ENCODE measurements at regions of chr16 and their contacts with region 1.

Region 1: DNA sequence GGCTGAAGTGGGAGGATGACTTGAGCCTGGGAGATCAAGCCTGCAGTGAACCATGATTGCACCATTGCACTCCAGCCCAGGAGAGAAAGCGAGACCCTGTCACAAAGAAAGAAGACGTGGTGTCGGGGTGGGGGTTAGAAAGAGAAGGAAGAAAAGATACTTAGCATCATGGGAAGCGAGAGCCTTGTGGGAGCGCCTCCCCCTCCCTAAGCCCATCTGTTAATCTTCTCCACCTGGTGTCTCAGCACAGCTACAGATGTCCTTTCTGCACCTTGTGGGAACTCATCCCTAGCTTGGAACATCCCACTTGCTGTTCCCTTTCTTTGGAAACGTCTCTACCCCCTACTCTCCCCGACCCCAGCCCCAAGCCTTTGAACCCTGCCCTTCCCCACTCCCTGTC is 6.0 kb downstream of the ZNF688 start:
- DNase-seq: no peak
- ATAC-seq: no peak
- H3K4me3 ChIP-seq: no peak overlapping the region
- H3K4me3 Mint-ChIP-seq: no peak overlapping the region
- H3K27ac ChIP-seq: no peak overlapping the region
- H3K27ac Mint-ChIP-seq: peak overlapping the region; percentile 26
- H3K4me1 ChIP-seq: peaks cover 25 to 42% of the 10 kb centered on the region in 2 donors
- H3K4me1 Mint-ChIP-seq: peaks cover 31% of the 10 kb centered on the region
- H3K27me3 ChIP-seq: no peaks in the 10 kb centered on the region
- H3K27me3 Mint-ChIP-seq: no peaks in the 10 kb centered on the region
- CTCF ChIP-seq: no peak

Region 2: DNA sequence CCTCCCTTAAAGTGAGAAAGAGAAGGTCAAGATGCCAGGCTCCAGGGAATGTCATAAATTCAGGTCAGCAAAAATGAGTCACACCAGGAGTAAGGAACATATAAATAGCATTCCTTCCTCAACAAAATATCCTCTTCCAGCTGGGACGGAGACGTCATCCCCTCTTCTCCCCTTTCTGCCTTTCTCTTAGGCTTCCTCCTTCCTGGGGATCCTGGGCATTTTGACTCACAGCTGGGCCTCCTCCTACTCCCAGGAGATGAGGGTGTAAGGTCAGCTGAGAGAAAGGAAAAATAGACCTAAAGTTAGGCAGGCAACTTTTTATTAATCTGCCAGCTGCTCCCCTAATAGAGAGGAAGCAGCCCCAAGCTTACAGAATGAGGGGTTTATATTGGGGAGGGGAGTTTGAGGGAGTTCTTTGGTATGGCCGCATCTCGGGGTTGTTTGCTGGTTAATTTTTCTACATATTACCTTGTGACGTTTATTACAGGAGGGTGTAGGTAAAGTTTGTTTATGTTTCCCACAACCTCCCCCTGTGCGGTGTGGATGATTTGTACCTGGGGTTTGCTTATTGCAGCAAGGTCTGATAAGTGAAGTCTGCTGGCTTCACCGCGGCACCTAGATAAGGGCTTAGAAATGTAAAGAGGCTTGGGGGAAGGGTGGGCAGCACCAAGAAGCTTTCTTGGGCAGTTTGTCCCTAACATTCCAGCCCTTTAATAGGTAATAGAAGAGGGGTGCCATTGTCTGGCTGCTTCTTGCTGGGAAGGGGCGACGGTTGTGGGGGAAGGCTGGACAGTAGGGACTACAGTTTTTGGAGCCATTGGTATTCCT is 23.8 kb before region 1 on chr16:
- CTCF ChIA-PET with region 1: no interaction called
- POLR2A ChIA-PET with region 1: no interaction called
- intact Hi-C with region 1: no loop called
- DNase-seq: no peak
- ATAC-seq: no peak
- H3K4me3 ChIP-seq: no peak overlapping the region
- H3K4me3 Mint-ChIP-seq: no peak overlapping the region
- H3K27ac ChIP-seq: no peak overlapping the region
- H3K27ac Mint-ChIP-seq: no peak overlapping the region
- H3K4me1 ChIP-seq: no peaks in the 10 kb centered on the region
- H3K4me1 Mint-ChIP-seq: peaks cover 5% of the 10 kb centered on the region
- H3K27me3 ChIP-seq: no peaks in the 10 kb centered on the region
- H3K27me3 Mint-ChIP-seq: no peaks in the 10 kb centered on the region
- CTCF ChIP-seq: no peak

Region 3: DNA sequence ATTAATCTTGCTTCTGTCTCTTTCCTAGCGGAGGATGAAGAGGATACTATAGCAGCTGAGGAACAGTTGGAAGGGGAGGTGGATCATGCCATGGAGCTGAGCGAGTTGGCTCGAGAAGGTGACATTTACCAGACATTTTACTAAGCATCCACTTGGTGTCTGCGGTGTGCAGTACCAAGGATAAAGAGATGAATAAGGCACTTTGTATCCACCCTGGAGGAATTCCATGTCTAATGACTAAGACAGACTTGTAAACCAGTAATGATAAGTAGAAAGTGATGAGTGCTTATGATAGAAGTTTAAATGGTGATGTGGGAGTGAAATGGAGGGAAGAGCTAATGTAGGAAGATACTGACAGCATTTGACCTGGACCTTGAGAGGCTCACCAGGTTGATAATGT is 145.4 kb after region 1 on chr16:
- CTCF ChIA-PET with region 1: no interaction called
- POLR2A ChIA-PET with region 1: no interaction called
- intact Hi-C with region 1: no loop called
- DNase-seq: no peak
- ATAC-seq: no peak
- H3K4me3 ChIP-seq: no peak overlapping the region
- H3K4me3 Mint-ChIP-seq: no peak overlapping the region
- H3K27ac ChIP-seq: no peak overlapping the region
- H3K27ac Mint-ChIP-seq: no peak overlapping the region
- H3K4me1 ChIP-seq: peaks cover 5 to 9% of the 10 kb centered on the region in 2 donors
- H3K4me1 Mint-ChIP-seq: peaks cover 11% of the 10 kb centered on the region
- H3K27me3 ChIP-seq: no peaks in the 10 kb centered on the region
- H3K27me3 Mint-ChIP-seq: no peaks in the 10 kb centered on the region
- CTCF ChIP-seq: no peak

Region 4: GRCh38 chr16:31022544-31023251 is 457.2 kb after region 1 on chr16:
- CTCF ChIA-PET with region 1: no interaction called
- POLR2A ChIA-PET with region 1: interaction called, 12 read pairs
- intact Hi-C with region 1: no loop called
- DNase-seq: no peak
- ATAC-seq: no peak
- H3K4me3 ChIP-seq: no peak overlapping the region
- H3K4me3 Mint-ChIP-seq: no peak overlapping the region
- H3K27ac ChIP-seq: no peak overlapping the region
- H3K27ac Mint-ChIP-seq: no peak overlapping the region
- H3K4me1 ChIP-seq: no peaks in the 10 kb centered on the region
- H3K4me1 Mint-ChIP-seq: no peaks in the 10 kb centered on the region
- H3K27me3 ChIP-seq: no peaks in the 10 kb centered on the region
- H3K27me3 Mint-ChIP-seq: peaks cover 3% of the 10 kb centered on the region
- CTCF ChIP-seq: no peak